ENCODE measurements at regions of chr10 and their contacts with region 1.

Region 1: GRCh38 chr10:124530215-124530665 is 68.6 kb downstream of the LHPP start:
- DNase-seq: peak; percentile 96
- H3K4me3 Mint-ChIP-seq: no peak overlapping the region
- H3K27ac Mint-ChIP-seq: no peak overlapping the region
- H3K4me1 Mint-ChIP-seq: peaks cover 5% of the 10 kb centered on the region
- H3K27me3 Mint-ChIP-seq: peaks cover 3% of the 10 kb centered on the region

Region 2: GRCh38 chr10:124612611-124613498 is 82.6 kb after region 1 on chr10:
- intact Hi-C with region 1: no loop called
- DNase-seq: no peak
- H3K4me3 Mint-ChIP-seq: no peak overlapping the region
- H3K27ac Mint-ChIP-seq: no peak overlapping the region
- H3K4me1 Mint-ChIP-seq: peaks cover 30% of the 10 kb centered on the region
- H3K27me3 Mint-ChIP-seq: peaks cover 1% of the 10 kb centered on the region

Region 3: DNA sequence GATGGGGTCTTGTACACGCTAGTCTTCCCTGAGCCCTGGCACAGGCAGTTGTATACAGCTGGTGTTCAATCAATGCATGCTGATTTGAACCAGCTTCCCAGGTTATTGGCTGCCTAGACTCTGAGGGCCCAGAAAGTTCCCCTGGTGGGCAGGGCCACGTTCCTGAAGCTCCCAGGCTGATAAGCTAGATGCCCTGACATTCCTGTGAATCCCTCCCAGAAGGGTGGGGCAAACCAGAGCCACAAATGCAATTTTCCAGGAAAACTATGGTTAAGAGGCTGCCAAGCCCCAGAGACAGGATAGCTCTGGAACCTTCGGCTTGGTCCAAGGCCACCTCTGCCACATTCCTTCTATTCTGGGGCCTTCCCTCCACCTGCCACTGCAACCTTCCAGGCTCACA is 135.7 kb after region 1 on chr10:
- intact Hi-C with region 1: no loop called
- DNase-seq: no peak
- H3K4me3 Mint-ChIP-seq: no peak overlapping the region
- H3K27ac Mint-ChIP-seq: no peak overlapping the region
- H3K4me1 Mint-ChIP-seq: peaks cover 12% of the 10 kb centered on the region
- H3K27me3 Mint-ChIP-seq: no peaks in the 10 kb centered on the region

Region 4: DNA sequence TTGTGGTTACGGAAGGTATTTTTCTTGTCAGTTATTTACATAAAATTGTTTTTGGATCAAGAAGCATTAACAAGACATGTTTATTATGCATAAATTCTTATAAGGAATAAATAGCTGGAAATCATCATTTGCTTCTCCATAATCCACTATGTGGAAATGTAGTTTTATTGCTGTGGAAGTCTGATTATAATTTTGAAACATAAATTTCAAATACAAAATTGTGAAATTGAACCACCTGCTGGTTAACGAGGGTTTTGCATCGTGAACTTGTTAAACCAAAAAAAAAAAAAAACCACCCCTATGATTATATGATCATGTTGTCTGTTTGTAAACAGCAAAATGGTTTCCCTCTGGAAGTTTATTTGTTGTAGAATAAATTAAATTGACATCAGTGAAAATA is 297.2 kb after region 1 on chr10:
- intact Hi-C with region 1: loop called (anchors 1 kb)
- DNase-seq: peak; percentile 63
- H3K4me3 Mint-ChIP-seq: no peak overlapping the region
- H3K27ac Mint-ChIP-seq: no peak overlapping the region
- H3K4me1 Mint-ChIP-seq: no peaks in the 10 kb centered on the region
- H3K27me3 Mint-ChIP-seq: no peaks in the 10 kb centered on the region

Measured in activated CD4-positive, alpha-beta T cell treated with anti-CD3 and anti-CD28 coated beads, Interleukin-2, amount 10 ng/mL, durations not matched to agents 24 days and 14 days (primary cell).